Common myeloid progenitor, CD34-positive (primary cell): ENCODE measurements at regions of chr14 and their contacts with region 1.

Region 1: DNA sequence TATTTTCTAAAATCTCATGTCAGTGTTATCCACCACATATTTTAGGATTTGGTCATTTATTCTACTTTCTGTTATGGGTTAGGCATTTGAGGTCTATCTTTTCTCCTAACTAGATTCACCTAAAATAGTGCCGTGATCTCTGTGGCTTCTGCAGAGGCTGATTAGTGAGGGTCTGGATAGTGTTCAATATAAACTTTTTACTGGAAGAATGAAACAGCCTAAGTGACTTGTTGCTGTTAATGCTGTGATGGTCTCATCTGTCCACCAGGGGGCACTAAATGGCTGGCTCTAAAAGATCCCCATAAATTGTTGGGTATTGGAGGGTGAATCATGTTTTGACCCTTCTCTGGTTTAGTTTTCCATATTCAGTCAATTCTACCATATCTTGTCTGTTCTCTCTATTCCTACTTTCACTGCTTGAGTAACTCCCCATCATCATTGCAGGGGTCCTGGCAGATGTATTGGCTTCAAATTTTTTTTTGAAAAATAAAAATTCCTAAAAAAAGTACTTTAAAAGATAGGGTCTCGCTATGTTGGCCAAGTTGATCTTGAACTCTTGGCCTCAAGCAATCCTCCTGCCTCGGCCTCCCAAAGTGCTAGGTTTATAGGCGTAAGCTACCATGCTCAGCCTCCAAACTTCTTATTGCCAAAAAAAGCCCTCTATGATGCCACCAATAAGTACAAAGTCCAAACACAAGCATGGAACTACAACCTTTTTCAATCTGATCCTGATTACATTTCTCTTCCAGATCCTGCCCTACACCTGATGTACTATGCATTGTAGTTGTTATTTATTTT is 6.9 kb downstream of the PABPN1 start:
- DNase-seq: peak; percentile 79 to 87 (median 79)
- H3K4me3 ChIP-seq: no peak overlapping the region
- H3K27ac ChIP-seq: no peak overlapping the region
- H3K4me1 ChIP-seq: peaks cover 0 to 6% (median 1%) of the 10 kb centered on the region in 4 experiments
- H3K27me3 ChIP-seq: no peaks in the 10 kb centered on the region

Region 2: GRCh38 chr14:23078692-23079116 is 249.4 kb before region 1 on chr14:
- CTCF ChIA-PET with region 1: no interaction called
- POLR2A ChIA-PET with region 1: no interaction called
- DNase-seq: no peak
- H3K4me3 ChIP-seq: no peak overlapping the region
- H3K27ac ChIP-seq: peak overlapping the region in 1 of 2 experiments; percentile 29
- H3K4me1 ChIP-seq: no peaks in the 10 kb centered on the region
- H3K27me3 ChIP-seq: no peaks in the 10 kb centered on the region

Region 3: DNA sequence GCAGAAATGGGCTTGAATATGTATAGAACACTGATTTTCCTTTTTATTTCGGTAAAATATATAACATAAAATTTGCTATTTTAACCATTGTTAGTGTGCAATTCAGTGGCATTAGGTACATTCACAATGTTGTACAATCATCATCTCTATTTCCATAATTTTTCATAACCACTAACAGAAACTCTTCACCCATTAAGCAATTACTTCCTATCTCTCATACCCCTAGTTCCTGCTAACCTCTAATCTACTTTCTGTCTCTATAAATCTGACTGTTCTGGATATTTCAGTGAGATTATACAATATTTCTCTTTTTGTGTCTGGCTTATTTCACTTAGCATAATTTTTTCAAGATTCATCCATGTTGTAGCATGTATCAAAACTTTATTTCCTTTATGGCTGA is 99.3 kb before region 1 on chr14:
- CTCF ChIA-PET with region 1: no interaction called
- POLR2A ChIA-PET with region 1: no interaction called
- DNase-seq: peak in 2 of 3 donors; percentile 10 to 15
- H3K4me3 ChIP-seq: no peak overlapping the region
- H3K27ac ChIP-seq: no peak overlapping the region
- H3K4me1 ChIP-seq: peaks cover 0 to 5% (median 0%) of the 10 kb centered on the region in 4 experiments
- H3K27me3 ChIP-seq: no peaks in the 10 kb centered on the region

Region 4: GRCh38 chr14:23269193-23269592 is 59.0 kb before region 1 on chr14:
- CTCF ChIA-PET with region 1: interaction called, 14 read pairs
- POLR2A ChIA-PET with region 1: no interaction called
- DNase-seq: no peak
- H3K4me3 ChIP-seq: no peak overlapping the region
- H3K27ac ChIP-seq: no peak overlapping the region
- H3K4me1 ChIP-seq: no peaks in the 10 kb centered on the region
- H3K27me3 ChIP-seq: peaks cover 0 to 3% (median 0%) of the 10 kb centered on the region in 5 experiments

Region 5: GRCh38 chr14:23352511-23353432 is 24.6 kb after region 1 on chr14 and contains the start of gene SLC22A17:
- CTCF ChIA-PET with region 1: interaction called, 12 read pairs
- POLR2A ChIA-PET with region 1: no interaction called
- DNase-seq: peak; percentile 79 to 86 (median 83)
- H3K4me3 ChIP-seq: peak within 1 kb of the TSS; percentile 45 to 85 (median 60)
- H3K27ac ChIP-seq: no peak within 1 kb of the TSS
- H3K4me1 ChIP-seq: peaks cover 0 to 16% (median 11%) of the 10 kb centered on the region in 4 experiments
- H3K27me3 ChIP-seq: peaks cover 0 to 47% (median 14%) of the 10 kb centered on the region in 5 experiments

Region 6: DNA sequence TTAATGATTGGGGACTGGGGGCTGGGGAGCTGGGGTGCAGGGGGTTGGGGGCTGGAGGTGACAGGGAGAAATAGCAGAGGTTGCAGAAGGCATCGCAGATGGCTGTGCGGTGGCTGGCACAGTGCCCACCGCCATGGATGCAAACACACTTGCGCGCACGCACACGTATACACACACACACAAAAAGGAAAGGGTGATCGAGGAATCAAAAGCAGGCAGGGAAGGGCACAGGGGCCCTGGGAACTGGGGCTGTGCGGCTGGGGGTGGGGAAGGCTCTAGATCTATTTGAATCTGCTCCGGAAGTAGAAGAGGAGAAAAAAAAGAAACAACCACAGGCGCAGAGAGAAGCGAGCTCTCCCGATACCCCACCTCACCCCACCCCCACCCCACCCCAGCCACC is 184.0 kb after region 1 on chr14:
- CTCF ChIA-PET with region 1: no interaction called
- POLR2A ChIA-PET with region 1: no interaction called
- DNase-seq: peak; percentile 11 to 57 (median 52)
- H3K4me3 ChIP-seq: peak overlapping the region in 4 of 7 experiments; percentile 6 to 62 (median 37)
- H3K27ac ChIP-seq: no peak overlapping the region
- H3K4me1 ChIP-seq: peaks cover 0 to 5% (median 3%) of the 10 kb centered on the region in 4 experiments
- H3K27me3 ChIP-seq: no peaks in the 10 kb centered on the region